ENCODE measurements at regions of chr10 and their contacts with region 1.

Region 1: DNA sequence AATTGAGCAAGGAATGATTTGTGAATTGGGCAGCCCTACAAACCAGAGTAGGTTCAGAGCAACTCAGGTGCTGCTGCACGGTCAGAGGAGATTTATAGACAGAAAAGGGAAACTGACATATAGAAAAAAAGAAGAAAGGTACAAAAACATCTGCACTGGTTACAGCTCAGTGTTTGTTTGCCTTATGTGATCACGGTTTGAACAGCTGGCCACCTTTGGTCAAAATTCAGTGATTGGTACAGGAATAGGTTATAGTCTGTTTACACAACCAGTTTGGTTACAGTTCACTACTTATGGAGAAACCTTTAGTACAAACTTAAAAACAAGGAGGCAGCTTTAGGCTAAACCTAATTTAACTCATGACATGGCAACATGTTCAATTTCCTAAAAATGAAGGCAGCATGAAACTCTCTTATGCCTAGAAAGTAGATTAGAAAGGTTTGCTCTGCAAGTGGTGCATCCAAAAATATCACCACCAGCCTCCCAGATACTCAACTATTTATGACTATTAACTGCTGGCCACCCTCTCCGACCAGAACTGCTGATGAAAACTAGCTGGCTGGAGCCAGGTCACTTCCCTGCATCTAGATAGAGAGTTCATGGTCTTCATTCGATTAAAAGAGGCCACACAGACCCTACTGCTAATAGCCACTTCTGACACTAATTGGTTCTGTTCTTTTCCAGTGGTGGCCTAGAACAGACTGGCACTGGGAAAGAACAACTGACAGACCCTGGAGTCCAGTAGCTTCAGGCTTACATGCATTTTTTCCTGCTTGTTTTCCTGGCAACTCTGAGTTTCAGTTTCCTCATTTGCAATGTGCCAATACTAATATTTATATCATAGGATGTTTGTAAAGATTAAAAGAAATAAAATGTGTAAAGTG is 548.0 kb downstream of the CCSER2 start:
- DNase-seq: no peak
- ATAC-seq: no peak

Region 2: DNA sequence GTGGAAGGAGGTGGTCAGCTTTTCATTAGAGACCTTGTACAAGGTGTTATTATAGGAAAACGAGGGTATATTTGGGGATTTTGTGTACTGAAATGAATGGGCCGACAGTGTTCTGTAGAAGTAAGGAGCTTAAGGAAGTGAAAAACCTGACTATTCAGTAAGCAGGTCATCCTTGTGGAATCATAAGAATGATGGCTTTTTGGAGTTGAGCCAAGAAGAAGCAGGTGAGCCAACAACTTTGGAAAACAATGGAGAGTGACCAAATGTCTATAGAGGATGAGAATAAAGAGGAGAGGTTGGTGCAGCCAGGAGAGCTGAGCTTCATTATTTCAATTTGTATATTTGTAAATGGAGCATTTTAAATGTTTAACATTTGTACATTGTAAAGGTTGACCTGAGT is 47.8 kb after region 1 on chr10:
- intact Hi-C with region 1: loop called (anchors 1 kb)
- DNase-seq: no peak
- ATAC-seq: no peak